Motor neuron (in vitro differentiated cells): ENCODE measurements at regions of chr2 and their contacts with region 1.

Region 1: DNA sequence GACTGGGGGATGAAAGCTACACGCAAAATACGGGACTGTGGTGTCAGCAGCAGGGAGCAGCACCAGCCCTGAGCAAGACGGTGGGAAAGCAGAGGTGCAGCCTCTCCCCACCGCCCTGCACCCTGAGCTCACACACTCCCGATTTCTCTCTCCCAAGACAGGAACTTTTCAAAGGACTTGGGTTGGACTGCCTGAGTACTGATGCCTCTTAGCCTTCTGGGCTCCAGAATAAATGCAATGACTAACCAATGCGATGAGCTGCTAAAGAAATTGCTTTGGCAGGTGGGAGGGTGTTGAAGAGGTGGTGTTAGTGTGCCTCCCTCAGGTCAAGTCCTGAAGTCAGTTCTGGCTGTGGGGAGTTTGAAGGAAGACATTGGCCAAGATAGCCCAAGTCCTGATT is 9.6 kb downstream of the TRIM54 start:
- ATAC-seq: peak in 1 of 8 experiments; percentile 26
- H3K4me3 ChIP-seq: no peak overlapping the region
- H3K27ac ChIP-seq: no peak overlapping the region
- H3K4me1 ChIP-seq: peaks cover 0 to 2% of the 10 kb centered on the region in 2 donors

Region 2: DNA sequence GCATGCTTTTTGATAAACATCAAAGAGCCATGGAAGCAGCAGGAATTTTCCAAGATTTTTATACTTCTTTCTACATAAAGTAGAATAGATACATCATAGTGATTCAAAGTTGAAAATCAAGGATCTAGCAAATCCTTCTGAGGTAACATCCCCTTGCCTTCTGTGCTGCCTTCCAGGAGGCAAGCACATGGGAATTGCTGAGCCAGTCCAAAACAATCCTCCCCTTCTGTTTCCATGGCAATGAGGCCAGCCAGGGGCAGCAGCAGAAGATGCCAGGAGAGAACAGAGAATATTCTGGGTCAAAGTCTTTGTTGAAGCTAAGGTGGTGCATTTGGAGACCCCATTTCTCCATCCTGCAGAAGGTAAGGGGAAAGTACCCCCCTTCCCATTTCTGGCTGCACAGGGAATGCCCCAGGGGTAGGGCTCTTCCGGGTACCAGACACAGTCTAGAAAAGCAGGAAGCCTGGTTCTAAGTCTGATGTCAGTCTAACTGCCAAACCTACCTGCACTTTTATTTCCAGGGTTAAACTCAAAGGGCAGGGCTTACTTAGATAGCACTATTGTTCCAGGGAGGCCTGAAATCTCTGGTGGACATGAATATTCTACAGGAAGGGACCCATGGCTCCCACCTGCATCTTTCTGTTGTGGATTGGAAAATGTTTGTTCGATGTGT is 483.9 kb before region 1 on chr2:
- in situ Hi-C with region 1: no loop called
- ATAC-seq: peak; percentile 62 to 86 (median 72)
- H3K4me3 ChIP-seq: no peak overlapping the region
- H3K27ac ChIP-seq: no peak overlapping the region
- H3K4me1 ChIP-seq: peaks cover 17% of the 10 kb centered on the region in 2 donors

Region 3: DNA sequence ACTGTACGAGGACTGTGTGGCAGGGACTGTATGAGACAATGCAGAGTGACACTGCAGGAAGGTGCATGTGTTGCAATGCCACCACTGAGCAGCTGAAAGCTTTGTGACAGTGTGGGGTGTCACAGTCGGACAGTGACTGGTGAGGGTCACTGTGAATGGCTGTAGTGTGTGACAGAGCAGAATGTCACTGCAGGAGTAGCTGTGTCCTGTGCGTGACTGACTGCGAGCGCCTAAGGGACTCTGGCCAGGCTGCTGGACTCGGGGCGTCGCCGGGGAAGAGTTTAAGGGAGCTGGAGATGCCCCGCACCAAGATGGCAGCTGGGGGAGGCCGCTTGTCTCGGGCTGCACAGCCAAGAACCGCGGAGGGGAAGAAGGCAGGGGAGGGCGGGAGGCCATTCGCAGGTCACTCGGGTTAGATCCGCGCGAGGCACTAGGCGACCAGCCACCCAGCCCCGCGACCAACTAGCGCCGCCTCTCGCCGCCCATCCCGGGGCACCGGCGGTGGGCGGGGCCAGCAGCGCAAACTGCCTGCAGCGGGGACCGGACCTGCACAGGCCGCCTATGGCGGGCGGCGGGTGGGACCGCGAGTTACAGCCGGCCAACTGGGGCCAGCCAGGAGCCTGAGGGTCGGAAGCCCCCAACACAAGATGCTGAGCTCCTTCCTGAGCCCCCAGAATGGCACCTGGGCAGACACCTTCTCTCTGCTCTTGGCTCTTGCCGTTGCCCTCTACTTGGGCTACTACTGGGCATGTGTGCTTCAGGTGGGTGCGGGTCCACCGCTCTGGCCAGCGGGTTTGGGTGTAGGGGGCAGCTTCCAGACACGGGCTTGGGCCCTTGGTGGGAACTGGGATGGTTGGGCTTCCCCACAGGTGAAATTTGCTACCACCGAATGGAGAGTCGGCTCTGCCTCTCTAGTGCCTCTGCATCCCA is 168.3 kb before region 1 on chr2 and contains the start of gene ABHD1:
- in situ Hi-C with region 1: loop called in 3 of 9 experiments (anchors 25 kb)
- ATAC-seq: peak; percentile 60 to 84 (median 74)
- H3K4me3 ChIP-seq: peak within 1 kb of the TSS; percentile 16 to 35 (median 20)
- H3K27ac ChIP-seq: no peak within 1 kb of the TSS
- H3K4me1 ChIP-seq: peaks cover 4 to 15% of the 10 kb centered on the region in 2 donors
- total RNA-seq, gene ABHD1: 0.94 to 2.9 (median 1.7) TPM in 7 of 8 experiments, not detected in the other